ENCODE measurements at regions of chr2 and their contacts with region 1.

Region 1: GRCh38 chr2:3728104-3729054 is 25.0 kb downstream of the DCDC2C start:
- DNase-seq: peak; percentile 39
- ATAC-seq: no peak
- H3K4me3 Mint-ChIP-seq: no peak overlapping the region
- H3K27ac Mint-ChIP-seq: no peak overlapping the region
- H3K4me1 Mint-ChIP-seq: no peaks in the 10 kb centered on the region
- H3K27me3 Mint-ChIP-seq: no peaks in the 10 kb centered on the region

Region 2: DNA sequence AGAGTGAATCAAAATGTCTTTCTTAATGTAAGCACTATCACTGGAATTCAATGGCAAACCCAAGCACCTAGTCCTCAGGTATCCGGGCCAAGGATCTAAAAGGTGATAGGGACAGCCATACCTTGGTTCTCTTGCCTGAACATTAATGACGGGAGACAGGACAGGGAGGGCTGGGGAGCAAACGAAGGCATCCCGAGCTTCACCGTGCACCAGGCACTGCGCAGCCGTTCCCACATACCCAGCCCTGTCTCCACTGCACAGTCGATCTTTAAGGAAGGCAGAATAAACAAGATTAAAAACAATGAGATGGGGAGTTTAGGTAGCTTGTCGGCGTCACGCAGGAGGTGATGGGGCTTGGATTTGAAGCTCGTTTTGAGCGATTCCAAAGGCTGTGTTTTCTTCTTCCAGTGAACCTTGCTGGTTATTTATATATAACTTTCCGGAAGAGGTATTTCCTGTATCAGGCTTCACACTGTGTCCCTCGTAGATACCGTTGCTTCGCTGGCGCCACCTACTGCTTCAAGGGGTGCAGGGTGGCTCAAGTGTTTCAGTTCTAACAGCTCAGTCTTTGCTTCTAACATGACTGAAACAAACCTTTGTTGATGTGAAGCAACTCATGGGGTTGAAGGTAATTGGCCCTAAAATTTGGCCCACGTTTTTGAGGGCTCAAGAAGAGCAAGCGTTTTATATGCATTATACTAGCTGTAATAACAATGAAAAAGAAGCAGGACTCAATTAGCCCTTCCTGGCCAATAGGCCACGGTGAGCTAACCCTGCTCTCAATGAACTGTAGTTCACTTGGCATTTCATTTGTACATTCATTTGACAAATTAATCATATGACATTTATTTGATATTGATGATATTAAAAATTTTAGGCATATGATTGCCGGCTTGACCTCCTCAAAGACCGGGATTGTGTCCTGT is 52.4 kb after region 1 on chr2:
- CTCF ChIA-PET with region 1: interaction called, 28 read pairs
- DNase-seq: peak; percentile 81
- ATAC-seq: peak; percentile 98
- H3K4me3 Mint-ChIP-seq: no peak overlapping the region
- H3K27ac Mint-ChIP-seq: no peak overlapping the region
- H3K4me1 Mint-ChIP-seq: peaks cover 7% of the 10 kb centered on the region
- H3K27me3 Mint-ChIP-seq: peaks cover 7% of the 10 kb centered on the region

Region 3: GRCh38 chr2:3827673-3828575 is 99.5 kb after region 1 on chr2:
- CTCF ChIA-PET with region 1: interaction called, 12 read pairs
- DNase-seq: no peak
- ATAC-seq: no peak
- H3K4me3 Mint-ChIP-seq: no peak overlapping the region
- H3K27ac Mint-ChIP-seq: no peak overlapping the region
- H3K4me1 Mint-ChIP-seq: no peaks in the 10 kb centered on the region
- H3K27me3 Mint-ChIP-seq: no peaks in the 10 kb centered on the region

Region 4: GRCh38 chr2:4140281-4140970 is 412.0 kb after region 1 on chr2:
- CTCF ChIA-PET with region 1: no interaction called
- DNase-seq: no peak
- ATAC-seq: no peak
- H3K4me3 Mint-ChIP-seq: no peak overlapping the region
- H3K27ac Mint-ChIP-seq: no peak overlapping the region
- H3K4me1 Mint-ChIP-seq: no peaks in the 10 kb centered on the region
- H3K27me3 Mint-ChIP-seq: no peaks in the 10 kb centered on the region